OCI-LY7 (cell line): ENCODE measurements at regions of chr18 and their contacts with region 1.

Region 1: DNA sequence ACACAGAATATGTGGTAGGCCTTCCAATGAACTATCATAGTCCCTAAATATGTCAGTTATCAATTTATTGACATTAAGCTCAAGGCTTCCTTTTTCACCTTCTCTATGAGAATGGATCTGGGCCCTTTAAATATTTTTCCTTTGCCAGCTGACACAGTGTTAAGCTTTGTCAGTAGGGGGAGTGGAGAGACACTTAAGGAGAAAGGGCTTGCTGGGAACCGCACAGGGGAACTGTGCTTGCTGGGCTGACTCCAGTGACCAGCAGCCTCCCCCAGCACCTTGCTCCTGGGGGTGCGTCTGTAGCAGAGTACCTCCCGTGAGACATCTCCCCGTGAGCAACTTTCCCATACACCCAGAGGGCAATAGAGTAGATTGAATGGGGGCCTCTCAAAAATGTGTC is 6.5 kb upstream of the PTPN2 start:
- DNase-seq: no peak
- H3K4me3 ChIP-seq: no peak overlapping the region
- H3K27ac ChIP-seq: no peak overlapping the region
- H3K4me1 ChIP-seq: peaks cover 13% of the 10 kb centered on the region
- CTCF ChIP-seq: peak; percentile 40; the same call in 1 of the 2 replicates

Region 2: GRCh38 chr18:12606592-12607315 is 283.8 kb before region 1 on chr18:
- CTCF ChIA-PET with region 1: no interaction called
- POLR2A ChIA-PET with region 1: no interaction called
- intact Hi-C with region 1: no loop called
- DNase-seq: no peak
- H3K4me3 ChIP-seq: no peak overlapping the region
- H3K27ac ChIP-seq: no peak overlapping the region
- H3K4me1 ChIP-seq: no peaks in the 10 kb centered on the region
- CTCF ChIP-seq: no peak

Region 3: DNA sequence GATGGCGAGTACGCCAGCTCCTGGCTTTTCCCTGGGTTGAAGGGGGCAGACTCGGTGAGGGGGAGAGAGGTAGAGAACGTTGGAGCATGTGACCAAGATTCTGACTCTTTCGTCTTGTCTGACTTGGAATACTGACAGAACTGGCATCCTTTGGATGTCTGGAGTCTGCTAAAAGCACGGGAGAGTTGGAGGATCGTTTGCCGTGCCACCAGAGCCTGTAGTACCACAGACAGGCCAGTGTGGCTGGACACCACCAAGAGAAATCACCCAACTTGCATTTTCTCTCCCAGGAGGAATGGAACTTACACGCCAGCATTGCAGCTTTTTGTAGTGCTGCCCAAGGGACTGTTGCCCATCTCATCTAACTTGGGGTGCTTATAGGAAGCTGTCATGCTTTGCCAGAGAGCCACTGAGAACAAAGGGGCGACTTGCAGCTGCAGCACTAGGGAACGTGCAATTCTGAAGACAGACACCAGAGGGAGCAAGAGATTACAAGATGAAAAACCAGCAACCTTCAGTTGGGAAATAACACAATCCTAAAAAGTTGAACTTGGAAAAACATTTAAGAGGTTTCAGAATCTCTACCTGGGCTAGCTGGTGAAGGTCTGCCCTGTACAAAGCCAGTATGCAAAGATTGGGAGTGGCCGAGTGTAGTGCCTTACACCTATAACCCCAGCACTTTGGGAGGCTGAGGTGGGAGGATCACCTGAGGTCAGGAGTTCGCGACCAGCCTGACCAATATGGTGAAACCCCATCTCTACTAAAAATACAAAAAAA is 163.5 kb before region 1 on chr18:
- CTCF ChIA-PET with region 1: interaction called, 3 read pairs
- POLR2A ChIA-PET with region 1: no interaction called
- intact Hi-C with region 1: loop called (anchors 1 kb)
- DNase-seq: peak; percentile 76
- H3K4me3 ChIP-seq: no peak overlapping the region
- H3K27ac ChIP-seq: no peak overlapping the region
- H3K4me1 ChIP-seq: peaks cover 8% of the 10 kb centered on the region
- CTCF ChIP-seq: peak; percentile 96

Region 4: GRCh38 chr18:12744103-12744502 is 146.4 kb before region 1 on chr18:
- CTCF ChIA-PET with region 1: no interaction called
- POLR2A ChIA-PET with region 1: interaction called, 7 read pairs
- intact Hi-C with region 1: loop called (anchors 1 kb)
- DNase-seq: peak; percentile 74
- H3K4me3 ChIP-seq: no peak overlapping the region
- H3K27ac ChIP-seq: no peak overlapping the region
- H3K4me1 ChIP-seq: peaks cover 18% of the 10 kb centered on the region
- CTCF ChIP-seq: peak; percentile 94

Region 5: DNA sequence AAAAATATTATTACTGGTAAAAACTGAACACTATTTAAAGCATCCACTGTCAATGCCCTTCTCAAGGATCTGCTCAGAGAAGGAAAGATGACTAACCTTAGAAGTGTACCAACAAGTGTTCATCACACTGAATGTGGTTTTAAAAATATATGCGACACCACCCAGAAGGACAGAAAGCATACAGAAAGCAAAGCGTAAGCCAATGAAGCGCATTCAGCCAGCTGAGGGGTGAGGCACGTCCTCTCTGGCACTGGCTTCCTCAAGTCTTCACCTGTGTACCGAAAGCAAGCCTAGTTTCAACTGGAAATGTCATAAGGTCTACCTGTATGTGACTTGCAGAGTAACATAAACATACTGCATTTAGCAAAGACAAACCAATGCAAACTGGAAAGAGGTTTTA is 98.9 kb before region 1 on chr18:
- CTCF ChIA-PET with region 1: no interaction called
- POLR2A ChIA-PET with region 1: no interaction called
- intact Hi-C with region 1: no loop called
- DNase-seq: no peak
- H3K4me3 ChIP-seq: no peak overlapping the region
- H3K27ac ChIP-seq: no peak overlapping the region
- H3K4me1 ChIP-seq: no peaks in the 10 kb centered on the region
- CTCF ChIP-seq: no peak